Activated CD8-positive, alpha-beta T cell treated with anti-CD3 and anti-CD28 coated beads, Interleukin-2, amount 10 ng/mL, durations not matched to agents 7 days and 5 days (primary cell): ENCODE measurements at regions of chr2 and their contacts with region 1.

Region 1: GRCh38 chr2:88857951-88858411 is 166.5 kb downstream of the RPIA start:
- DNase-seq: no peak
- ATAC-seq: no peak
- H3K4me3 Mint-ChIP-seq: no peak overlapping the region
- H3K27ac Mint-ChIP-seq: no peak overlapping the region
- H3K4me1 Mint-ChIP-seq: no peaks in the 10 kb centered on the region
- H3K27me3 Mint-ChIP-seq: peaks cover 13% of the 10 kb centered on the region

Region 2: GRCh38 chr2:88709181-88709641 is 148.8 kb before region 1 on chr2:
- CTCF ChIA-PET with region 1: no interaction called
- POLR2A ChIA-PET with region 1: no interaction called
- DNase-seq: no peak
- ATAC-seq: no peak
- H3K4me3 Mint-ChIP-seq: no peak overlapping the region
- H3K27ac Mint-ChIP-seq: no peak overlapping the region
- H3K4me1 Mint-ChIP-seq: no peaks in the 10 kb centered on the region
- H3K27me3 Mint-ChIP-seq: no peaks in the 10 kb centered on the region

Region 3: GRCh38 chr2:88747990-88748389 is 110.0 kb before region 1 on chr2:
- CTCF ChIA-PET with region 1: no interaction called
- POLR2A ChIA-PET with region 1: no interaction called
- DNase-seq: no peak
- ATAC-seq: no peak
- H3K4me3 Mint-ChIP-seq: no peak overlapping the region
- H3K27ac Mint-ChIP-seq: no peak overlapping the region
- H3K4me1 Mint-ChIP-seq: peaks cover 22% of the 10 kb centered on the region
- H3K27me3 Mint-ChIP-seq: no peaks in the 10 kb centered on the region

Region 4: DNA sequence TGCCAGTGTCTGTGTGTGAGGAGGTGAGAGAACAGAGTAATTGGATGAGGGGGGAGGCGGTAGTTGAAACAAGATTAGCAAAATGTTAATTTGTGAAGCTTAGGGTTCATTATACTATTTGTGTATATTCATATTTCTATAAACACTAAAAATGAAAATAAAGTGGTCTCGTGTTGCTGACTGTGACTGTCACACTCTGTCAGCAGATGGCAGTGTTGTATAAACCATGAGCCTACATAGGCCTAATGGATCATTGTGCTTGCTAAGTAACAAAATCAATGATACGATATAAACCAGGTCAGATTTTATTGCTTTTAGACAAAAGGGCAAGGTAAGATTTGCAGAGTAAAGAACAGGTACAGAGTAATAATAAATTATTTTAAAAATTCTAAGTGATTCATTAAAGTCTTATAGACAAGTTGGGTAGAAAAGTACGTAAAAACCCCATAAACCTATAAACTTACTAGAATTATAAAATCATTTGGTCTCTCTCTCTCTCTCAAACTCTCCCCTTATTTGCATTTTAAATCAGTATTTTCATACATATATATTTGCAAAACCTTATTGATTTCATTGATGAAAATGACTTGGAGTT is 16.2 kb after region 1 on chr2:
- CTCF ChIA-PET with region 1: interaction called, 28 read pairs
- POLR2A ChIA-PET with region 1: no interaction called
- DNase-seq: peak; percentile 66
- ATAC-seq: peak; percentile 70
- H3K4me3 Mint-ChIP-seq: no peak overlapping the region
- H3K27ac Mint-ChIP-seq: no peak overlapping the region
- H3K4me1 Mint-ChIP-seq: no peaks in the 10 kb centered on the region
- H3K27me3 Mint-ChIP-seq: peaks cover 18% of the 10 kb centered on the region